ENCODE measurements at regions of chr2 and their contacts with region 1.

Region 1: DNA sequence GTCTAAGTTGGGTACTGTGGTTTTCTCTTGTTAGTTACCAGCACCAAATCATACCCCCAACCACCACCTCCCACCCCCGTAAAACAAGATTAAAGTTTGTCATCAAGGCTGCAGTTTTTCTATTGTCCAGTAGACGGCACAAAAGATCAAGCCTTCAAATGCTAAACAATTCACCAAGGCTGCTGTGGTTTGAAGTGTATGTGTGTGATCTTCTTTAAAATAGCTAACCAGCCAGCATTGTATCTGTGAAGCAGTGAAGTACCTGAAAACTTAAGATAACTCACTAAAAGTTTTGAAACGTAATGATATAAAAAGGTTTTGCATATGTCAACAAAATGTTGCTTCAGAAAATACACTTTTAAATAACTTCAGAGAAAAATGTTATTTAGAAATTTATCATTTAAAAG is 5.9 kb upstream of the MEIS1 start:
- DNase-seq: peak in 1 of 5 donors; percentile 18
- ATAC-seq: no peak
- H3K4me3 ChIP-seq: no peak overlapping the region
- H3K27ac ChIP-seq: peak overlapping the region in 1 of 12 donors; percentile 6
- H3K4me1 ChIP-seq: peaks cover 0 to 17% (median 5%) of the 10 kb centered on the region in 12 donors
- H3K27me3 ChIP-seq: peaks cover 0 to 75% (median 40%) of the 10 kb centered on the region in 9 donors
- CTCF ChIP-seq: peak; percentile 55 to 86 (median 72)
- POLR2A ChIP-seq: no peak

Region 2: GRCh38 chr2:65640793-65641103 is 788.3 kb before region 1 on chr2:
- intact Hi-C with region 1: loop called in 1 of 10 experiments (anchors 5 kb)
- DNase-seq: no peak
- ATAC-seq: no peak
- H3K4me3 ChIP-seq: no peak overlapping the region
- H3K27ac ChIP-seq: no peak overlapping the region
- H3K4me1 ChIP-seq: no peaks in the 10 kb centered on the region
- H3K27me3 ChIP-seq: peaks cover 0 to 13% (median 0%) of the 10 kb centered on the region in 9 donors
- CTCF ChIP-seq: no peak
- POLR2A ChIP-seq: no peak

Region 3: DNA sequence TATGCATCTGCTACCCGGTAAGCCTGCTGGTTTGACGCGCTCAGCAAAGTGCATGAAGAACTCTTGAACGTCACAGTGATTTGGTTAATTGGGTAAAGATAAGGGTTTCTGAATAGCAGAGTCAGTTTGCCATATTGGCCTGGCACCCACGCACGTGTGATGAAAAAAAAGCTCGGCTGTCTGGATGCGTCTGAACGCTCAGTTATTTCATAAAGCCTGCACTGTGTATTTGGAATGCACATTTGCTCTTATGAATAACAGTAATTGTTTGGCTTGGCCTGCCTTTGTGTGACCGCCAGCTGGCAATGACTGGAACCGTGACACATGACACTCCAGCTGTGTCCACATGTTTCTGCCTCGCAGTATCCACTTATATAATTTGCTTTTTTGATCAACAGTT is 123.4 kb before region 1 on chr2:
- intact Hi-C with region 1: loop called in 1 of 10 experiments (anchors 10 kb)
- DNase-seq: peak; percentile 66 to 79 (median 75)
- ATAC-seq: peak; percentile 48 to 73 (median 70)
- H3K4me3 ChIP-seq: no peak overlapping the region
- H3K27ac ChIP-seq: peak overlapping the region in 5 of 12 donors; percentile 15 to 63 (median 43)
- H3K4me1 ChIP-seq: peaks cover 0 to 16% (median 0%) of the 10 kb centered on the region in 12 donors
- H3K27me3 ChIP-seq: no peaks in the 10 kb centered on the region
- CTCF ChIP-seq: no peak
- POLR2A ChIP-seq: no peak

Region 4: DNA sequence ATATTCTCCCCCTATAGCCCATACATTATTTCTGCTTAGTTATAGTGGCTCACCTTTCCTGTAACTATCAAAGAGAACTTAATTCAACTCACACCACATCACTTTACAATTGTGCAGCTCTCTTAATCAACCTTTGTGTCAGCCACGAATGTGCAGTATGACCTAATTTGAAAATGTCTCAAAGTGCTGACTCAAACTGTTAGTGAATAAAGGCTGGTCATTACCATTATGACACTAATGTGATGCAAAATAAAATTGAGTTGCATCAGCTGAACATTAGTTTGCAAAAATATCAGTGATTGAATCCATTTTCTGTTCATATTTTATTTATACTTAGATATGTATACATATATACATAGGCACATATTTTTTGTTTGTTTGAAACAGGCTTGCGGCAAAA is 257.7 kb after region 1 on chr2:
- intact Hi-C with region 1: loop called in 1 of 10 experiments (anchors 10 kb)
- DNase-seq: no peak
- ATAC-seq: no peak
- H3K4me3 ChIP-seq: no peak overlapping the region
- H3K27ac ChIP-seq: peak overlapping the region in 1 of 12 donors; percentile 81
- H3K4me1 ChIP-seq: peaks cover 0 to 12% (median 0%) of the 10 kb centered on the region in 12 donors
- H3K27me3 ChIP-seq: peaks cover 0 to 15% (median 0%) of the 10 kb centered on the region in 9 donors
- CTCF ChIP-seq: no peak
- POLR2A ChIP-seq: no peak

Region 5: GRCh38 chr2:67476809-67477790 is 1048.0 kb after region 1 on chr2:
- intact Hi-C with region 1: loop called in 3 of 10 experiments (anchors 5 to 10 kb)
- DNase-seq: no peak
- ATAC-seq: peak in 3 of 4 donors; percentile 61 to 67 (median 65)
- H3K4me3 ChIP-seq: no peak overlapping the region
- H3K27ac ChIP-seq: no peak overlapping the region
- H3K4me1 ChIP-seq: peaks cover 0 to 6% (median 0%) of the 10 kb centered on the region in 12 donors
- H3K27me3 ChIP-seq: no peaks in the 10 kb centered on the region
- CTCF ChIP-seq: peak; percentile 13 to 60 (median 40)
- POLR2A ChIP-seq: no peak

Measured in heart left ventricle (tissue), 16 donors.